ENCODE measurements at regions of chr7 and their contacts with region 1.

Region 1: DNA sequence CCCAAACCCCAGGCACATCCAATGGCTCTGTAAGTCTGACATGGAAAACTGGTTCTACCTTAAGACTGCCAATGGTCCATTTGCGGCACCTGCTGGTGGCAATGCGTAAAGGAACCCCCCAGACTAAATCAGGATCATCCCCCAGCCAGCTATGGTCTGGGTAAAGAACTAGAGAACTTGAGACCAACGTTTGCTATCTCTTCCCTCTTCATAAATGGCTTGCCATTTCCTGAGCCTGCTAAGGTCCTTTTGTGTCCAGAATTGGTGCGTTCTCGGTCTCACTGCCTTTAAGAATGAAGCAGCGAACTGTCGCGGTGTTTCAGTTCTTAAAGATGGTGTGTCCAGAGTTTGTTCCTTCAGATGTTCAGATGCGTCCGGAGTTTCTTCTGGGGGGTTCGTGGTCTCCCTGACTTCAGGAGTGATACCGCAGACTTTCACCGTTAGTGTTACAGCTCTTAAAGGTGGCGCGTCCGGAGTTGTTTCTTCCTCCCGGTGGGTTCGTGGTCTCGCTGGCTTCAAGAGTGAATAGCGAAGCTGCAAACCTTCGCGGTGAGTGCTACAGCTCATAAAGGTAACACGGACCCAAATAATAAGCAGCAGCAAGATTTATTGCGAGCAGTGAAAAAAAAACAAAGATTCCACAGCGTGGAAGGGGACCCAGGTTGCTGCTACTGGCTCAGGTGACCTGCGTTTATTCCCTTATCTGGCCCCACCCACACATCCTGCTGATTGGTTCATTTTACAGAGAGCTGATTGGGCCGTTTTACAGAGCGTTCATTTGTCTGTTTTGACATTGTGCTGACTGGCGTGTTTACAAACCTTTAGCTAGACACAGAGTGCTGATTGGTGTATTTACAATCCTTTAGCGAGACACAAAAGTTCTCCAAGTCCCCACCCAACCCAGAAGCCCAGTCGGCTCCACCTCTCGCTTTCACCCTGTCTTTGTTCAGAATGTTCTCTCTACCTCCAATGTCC is 95.4 kb downstream of the ELMO1 start:
- DNase-seq: peak; percentile 75
- H3K4me3 Mint-ChIP-seq: peak overlapping the region; percentile 87
- H3K27ac Mint-ChIP-seq: peak overlapping the region; percentile 88
- H3K4me1 Mint-ChIP-seq: peaks cover 77% of the 10 kb centered on the region
- H3K27me3 Mint-ChIP-seq: no peaks in the 10 kb centered on the region

Region 2: DNA sequence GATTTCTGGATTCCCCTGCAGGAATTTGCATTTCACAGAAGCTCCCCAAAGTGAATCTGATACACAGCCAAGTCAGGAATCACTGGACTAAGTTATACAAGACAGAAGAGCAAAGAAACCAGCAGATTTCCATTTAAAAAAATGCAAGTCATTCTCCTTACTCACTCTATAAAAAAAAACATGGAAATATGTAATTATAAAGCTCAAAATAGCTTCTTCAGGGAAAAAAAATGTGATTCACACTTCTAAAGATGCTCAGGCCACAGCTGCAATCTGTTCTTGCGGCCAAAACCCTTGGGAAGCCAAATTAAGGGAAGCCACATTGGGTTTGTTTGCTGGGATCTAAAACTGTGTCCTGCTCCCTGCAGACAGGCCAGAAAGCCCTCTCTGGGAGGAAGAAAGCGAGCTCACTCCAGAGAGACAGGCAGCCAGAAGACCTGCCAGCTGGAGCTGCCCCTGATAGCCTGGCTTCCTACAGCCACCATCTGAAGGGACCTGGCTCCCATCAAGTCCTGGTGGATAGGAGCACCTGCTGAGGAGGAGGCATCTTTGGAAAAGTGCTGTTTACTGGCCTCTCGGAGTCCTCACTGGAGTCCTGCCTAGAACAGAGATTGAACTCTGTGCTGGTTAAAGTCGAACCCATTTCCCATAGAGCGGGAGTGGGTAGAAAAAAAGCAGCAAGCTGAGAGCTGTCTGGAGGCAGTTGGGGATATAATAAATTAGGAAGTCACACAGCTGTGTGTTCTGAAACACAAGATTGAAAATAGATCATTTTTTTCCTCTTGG is 269.8 kb before region 1 on chr7:
- CTCF ChIA-PET with region 1: no interaction called
- POLR2A ChIA-PET with region 1: no interaction called
- DNase-seq: no peak
- H3K4me3 Mint-ChIP-seq: no peak overlapping the region
- H3K27ac Mint-ChIP-seq: no peak overlapping the region
- H3K4me1 Mint-ChIP-seq: peaks cover 14% of the 10 kb centered on the region
- H3K27me3 Mint-ChIP-seq: no peaks in the 10 kb centered on the region

Region 3: GRCh38 chr7:37234928-37235327 is 118.3 kb before region 1 on chr7:
- CTCF ChIA-PET with region 1: interaction called, 22 read pairs
- POLR2A ChIA-PET with region 1: no interaction called
- DNase-seq: no peak
- H3K4me3 Mint-ChIP-seq: no peak overlapping the region
- H3K27ac Mint-ChIP-seq: no peak overlapping the region
- H3K4me1 Mint-ChIP-seq: peaks cover 11% of the 10 kb centered on the region
- H3K27me3 Mint-ChIP-seq: no peaks in the 10 kb centered on the region

Region 4: GRCh38 chr7:37342688-37343471 is 10.4 kb before region 1 on chr7:
- CTCF ChIA-PET with region 1: interaction called, 24 read pairs
- POLR2A ChIA-PET with region 1: interaction called, 30 read pairs
- DNase-seq: peak; percentile 78
- H3K4me3 Mint-ChIP-seq: peak overlapping the region; percentile 91
- H3K27ac Mint-ChIP-seq: peak overlapping the region; percentile 98
- H3K4me1 Mint-ChIP-seq: peaks cover 65% of the 10 kb centered on the region
- H3K27me3 Mint-ChIP-seq: no peaks in the 10 kb centered on the region

Region 5: GRCh38 chr7:37408291-37409228 is 55.3 kb after region 1 on chr7:
- CTCF ChIA-PET with region 1: interaction called, 12 read pairs
- POLR2A ChIA-PET with region 1: interaction called, 6 read pairs
- DNase-seq: peak; percentile 30
- H3K4me3 Mint-ChIP-seq: peak overlapping the region; percentile 73
- H3K27ac Mint-ChIP-seq: peak overlapping the region; percentile 82
- H3K4me1 Mint-ChIP-seq: peaks cover 54% of the 10 kb centered on the region
- H3K27me3 Mint-ChIP-seq: no peaks in the 10 kb centered on the region

Region 6: DNA sequence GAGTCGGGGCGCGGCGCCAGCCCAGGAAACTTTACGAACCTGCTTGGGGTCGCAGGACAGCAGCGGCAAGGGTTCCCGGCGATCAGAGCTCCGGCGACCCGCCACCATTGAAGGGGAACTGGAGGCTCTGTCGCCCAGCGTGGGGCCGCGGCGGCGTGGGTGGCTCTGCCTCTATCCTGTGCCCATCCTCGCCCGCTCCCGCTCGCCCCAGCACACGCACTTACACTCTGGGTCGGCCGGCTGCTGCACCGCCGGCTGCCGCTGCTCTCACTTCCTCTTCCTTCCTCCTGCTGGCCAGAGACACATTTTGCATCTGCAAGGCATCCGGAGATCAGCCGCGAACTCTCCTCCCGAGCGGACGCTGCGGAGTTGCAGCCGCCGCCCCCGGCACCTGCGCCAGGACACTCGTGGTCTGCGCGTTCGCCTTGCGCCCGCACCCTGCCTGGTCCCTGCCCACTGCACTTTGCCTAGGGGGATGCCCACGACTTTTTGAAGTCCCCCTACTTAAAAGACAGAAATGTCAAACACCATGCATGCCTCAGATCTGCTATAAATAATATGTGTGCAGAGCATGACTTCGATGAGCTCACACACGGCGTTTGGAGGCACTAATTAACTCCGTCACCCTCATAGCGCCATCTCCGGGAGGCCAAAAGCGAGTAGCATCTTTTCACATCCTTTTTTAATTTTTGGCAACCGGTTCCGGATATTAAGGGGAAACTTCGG is 95.5 kb after region 1 on chr7 and contains the start of gene ELMO1:
- CTCF ChIA-PET with region 1: interaction called, 25 read pairs
- POLR2A ChIA-PET with region 1: interaction called, 56 read pairs
- DNase-seq: peak; percentile 86
- H3K4me3 Mint-ChIP-seq: peak within 1 kb of the TSS; percentile 90
- H3K27ac Mint-ChIP-seq: peak within 1 kb of the TSS; percentile 90
- H3K4me1 Mint-ChIP-seq: peaks cover 60% of the 10 kb centered on the region
- H3K27me3 Mint-ChIP-seq: peaks cover 3% of the 10 kb centered on the region
- total RNA-seq, gene ELMO1: 100 to 102 TPM